ENCODE measurements at regions of chr15 and their contacts with region 1.

Region 1: DNA sequence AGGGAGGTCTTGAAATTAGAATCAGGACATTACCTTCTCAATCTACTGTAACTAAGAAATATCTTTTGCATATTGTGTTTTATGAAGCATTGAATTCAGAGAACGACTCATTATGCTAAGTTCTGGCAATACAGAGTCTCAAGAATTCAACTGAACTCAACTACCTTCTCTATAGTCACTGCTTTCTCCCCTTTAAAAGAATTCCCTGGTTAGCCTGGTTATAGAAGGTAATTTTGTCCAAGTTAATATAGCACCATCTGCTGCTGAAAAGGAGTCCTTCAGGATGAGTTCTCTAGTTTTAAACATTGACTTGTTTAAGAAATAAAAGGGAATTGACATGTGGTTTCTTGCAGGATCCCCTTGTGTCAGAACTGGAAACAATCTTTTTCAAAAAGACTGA is 60.2 kb downstream of the IL16 start:
- H3K4me3 Mint-ChIP-seq: no peak overlapping the region
- H3K27ac Mint-ChIP-seq: no peak overlapping the region
- H3K4me1 Mint-ChIP-seq: no peaks in the 10 kb centered on the region
- H3K27me3 Mint-ChIP-seq: peaks cover 15% of the 10 kb centered on the region

Region 2: GRCh38 chr15:81155375-81156218 is 101.3 kb before region 1 on chr15:
- intact Hi-C with region 1: loop called (anchors 2 kb)
- H3K4me3 Mint-ChIP-seq: no peak overlapping the region
- H3K27ac Mint-ChIP-seq: no peak overlapping the region
- H3K4me1 Mint-ChIP-seq: no peaks in the 10 kb centered on the region
- H3K27me3 Mint-ChIP-seq: peaks cover 6% of the 10 kb centered on the region